Transverse colon (tissue), 4 donors: ENCODE measurements at regions of chr18 and their contacts with region 1.

Region 1: DNA sequence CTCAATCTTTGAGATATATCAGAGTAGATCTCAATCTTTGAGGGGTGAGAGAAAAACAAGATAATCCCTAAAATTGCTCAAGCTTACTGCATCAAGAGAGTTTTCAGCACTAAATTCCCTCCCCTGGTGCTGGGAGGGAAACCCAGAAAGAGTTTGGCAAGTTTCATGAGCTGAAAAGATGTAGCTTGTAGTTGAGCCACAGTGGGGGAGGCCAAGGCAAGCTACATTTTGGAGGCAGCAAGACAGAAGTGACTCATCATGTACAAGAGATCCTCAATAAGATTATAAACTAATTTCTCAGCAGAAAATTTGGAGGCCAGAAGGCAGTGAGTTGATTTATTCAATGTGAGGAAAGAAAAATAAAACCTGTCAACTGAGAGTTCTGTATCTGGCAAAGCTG is 308.2 kb downstream of the PIEZO2 start:
- DNase-seq: no peak
- H3K4me3 ChIP-seq: no peak overlapping the region
- H3K27ac ChIP-seq: no peak overlapping the region
- H3K4me1 ChIP-seq: no peaks in the 10 kb centered on the region
- H3K27me3 ChIP-seq: no peaks in the 10 kb centered on the region
- CTCF ChIP-seq: no peak
- EP300 ChIP-seq: no peak
- POLR2A ChIP-seq: no peak

Region 2: DNA sequence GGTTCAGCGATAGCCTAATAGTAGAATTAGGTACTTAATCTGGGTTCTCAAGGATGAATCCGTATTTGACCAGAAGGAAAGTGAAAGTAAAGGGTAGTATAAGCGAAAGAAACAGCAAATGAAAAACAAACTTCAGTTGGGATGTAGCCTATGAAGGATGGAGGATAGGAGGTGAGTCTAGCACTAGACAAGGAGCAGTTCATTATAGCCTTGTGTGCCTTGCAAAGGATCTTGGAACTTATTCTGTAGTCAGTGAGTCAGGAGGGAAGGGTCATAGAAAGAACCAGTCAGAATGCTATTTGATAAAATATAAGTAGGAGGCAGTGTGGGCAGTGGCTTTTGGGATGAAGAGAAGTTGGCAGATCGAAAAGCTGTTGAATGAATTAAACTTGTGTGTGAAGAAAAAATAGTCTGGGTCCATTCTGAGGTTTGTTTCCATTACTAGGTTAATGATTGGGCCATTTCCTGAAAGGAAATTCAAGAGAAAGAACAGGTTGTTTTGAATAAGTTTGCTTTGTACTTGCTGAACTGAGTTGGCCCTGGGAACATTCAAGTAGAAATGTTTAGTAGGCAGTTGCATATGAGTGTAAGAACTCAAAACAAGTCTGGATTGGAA is 1656.1 kb before region 1 on chr18:
- in situ Hi-C with region 1: no loop called
- intact Hi-C with region 1: loop called (anchors 5 kb)
- DNase-seq: no peak
- H3K4me3 ChIP-seq: no peak overlapping the region
- H3K27ac ChIP-seq: no peak overlapping the region
- H3K4me1 ChIP-seq: peaks cover 0 to 32% (median 5%) of the 10 kb centered on the region in 4 donors
- H3K27me3 ChIP-seq: no peaks in the 10 kb centered on the region
- CTCF ChIP-seq: no peak
- EP300 ChIP-seq: no peak
- POLR2A ChIP-seq: no peak

Region 3: DNA sequence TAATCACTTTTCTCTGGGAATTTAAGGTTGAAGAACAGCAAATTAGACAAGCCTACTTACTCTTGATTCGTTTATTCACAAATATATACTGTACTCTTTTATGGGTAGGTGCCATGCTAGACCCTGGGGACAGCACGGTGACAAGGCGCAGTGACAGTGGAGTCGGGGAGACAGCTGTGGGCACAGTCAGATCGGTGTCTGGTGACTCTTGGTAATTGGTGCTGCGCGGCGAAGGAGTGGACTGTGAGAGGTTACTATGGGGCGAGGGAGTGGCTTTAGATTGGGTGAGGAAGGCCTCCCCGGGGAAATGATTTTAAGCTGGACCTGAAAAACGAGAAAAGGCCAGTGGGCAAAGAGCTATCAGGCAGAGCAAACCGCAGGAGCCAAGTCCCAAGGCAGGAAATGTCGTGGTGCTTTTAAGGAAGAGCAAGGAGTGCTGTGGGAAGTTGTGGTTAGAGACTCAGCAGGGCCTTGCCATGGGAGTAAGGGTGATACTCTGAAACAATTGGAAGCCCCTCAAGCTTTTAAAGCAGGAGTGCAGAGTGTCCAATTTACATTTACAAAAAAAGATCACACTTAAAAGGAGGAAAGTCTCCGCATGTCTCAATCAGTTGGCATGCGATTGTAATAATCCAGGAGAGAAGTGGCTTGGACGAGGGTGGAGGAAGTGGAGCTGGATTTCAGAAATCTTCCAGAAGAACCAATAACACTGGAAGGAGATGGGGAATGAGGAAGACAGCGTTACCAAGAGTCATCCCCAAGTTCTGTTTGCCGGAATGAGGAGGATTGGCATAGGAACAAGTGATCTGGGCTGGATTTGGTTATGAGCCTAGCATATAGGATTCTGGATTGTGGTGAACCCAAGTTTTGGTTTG is 991.6 kb before region 1 on chr18:
- in situ Hi-C with region 1: no loop called
- intact Hi-C with region 1: no loop called
- DNase-seq: peak; percentile 50
- H3K4me3 ChIP-seq: no peak overlapping the region
- H3K27ac ChIP-seq: peak overlapping the region in 3 of 4 donors; percentile 31 to 60 (median 59)
- H3K4me1 ChIP-seq: peaks cover 0 to 50% (median 22%) of the 10 kb centered on the region in 4 donors
- H3K27me3 ChIP-seq: no peaks in the 10 kb centered on the region
- CTCF ChIP-seq: no peak
- EP300 ChIP-seq: no peak
- POLR2A ChIP-seq: no peak

Region 4: DNA sequence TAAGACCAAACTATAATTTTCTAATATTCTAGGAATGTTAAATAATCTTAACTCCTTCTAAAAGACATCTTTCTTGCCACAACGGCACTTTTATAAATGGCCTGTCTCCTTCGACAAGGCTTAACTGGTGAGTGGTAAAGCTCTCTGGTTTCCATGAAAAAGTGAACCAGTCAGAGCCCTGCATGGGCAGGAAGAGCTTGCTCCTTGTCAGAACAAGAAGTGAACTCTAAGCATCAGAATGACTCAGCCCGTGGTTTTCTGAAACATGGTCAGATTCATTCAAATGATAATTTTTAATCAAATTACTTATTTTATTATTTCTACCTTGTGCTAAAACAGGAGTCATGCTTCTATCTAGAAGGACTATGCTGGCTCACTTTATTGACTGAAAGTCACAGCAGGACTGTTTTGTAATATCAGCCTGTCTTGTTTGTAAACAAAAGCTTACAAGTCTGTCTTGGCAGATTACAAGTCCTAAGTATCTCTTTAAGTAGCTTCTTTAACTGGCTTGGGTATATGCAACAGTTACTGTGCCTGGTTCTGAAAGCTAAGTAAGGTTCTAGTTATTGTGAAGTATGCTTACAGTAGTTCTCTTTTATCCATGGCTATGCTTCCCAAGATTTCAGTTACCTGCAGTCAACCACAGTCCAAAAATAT is 70.0 kb before region 1 on chr18:
- in situ Hi-C with region 1: loop called in 1 of 4 experiments (anchors 10 kb)
- intact Hi-C with region 1: no loop called
- DNase-seq: no peak
- H3K4me3 ChIP-seq: no peak overlapping the region
- H3K27ac ChIP-seq: no peak overlapping the region
- H3K4me1 ChIP-seq: no peaks in the 10 kb centered on the region
- H3K27me3 ChIP-seq: no peaks in the 10 kb centered on the region
- CTCF ChIP-seq: no peak
- EP300 ChIP-seq: no peak
- POLR2A ChIP-seq: no peak

Region 5: DNA sequence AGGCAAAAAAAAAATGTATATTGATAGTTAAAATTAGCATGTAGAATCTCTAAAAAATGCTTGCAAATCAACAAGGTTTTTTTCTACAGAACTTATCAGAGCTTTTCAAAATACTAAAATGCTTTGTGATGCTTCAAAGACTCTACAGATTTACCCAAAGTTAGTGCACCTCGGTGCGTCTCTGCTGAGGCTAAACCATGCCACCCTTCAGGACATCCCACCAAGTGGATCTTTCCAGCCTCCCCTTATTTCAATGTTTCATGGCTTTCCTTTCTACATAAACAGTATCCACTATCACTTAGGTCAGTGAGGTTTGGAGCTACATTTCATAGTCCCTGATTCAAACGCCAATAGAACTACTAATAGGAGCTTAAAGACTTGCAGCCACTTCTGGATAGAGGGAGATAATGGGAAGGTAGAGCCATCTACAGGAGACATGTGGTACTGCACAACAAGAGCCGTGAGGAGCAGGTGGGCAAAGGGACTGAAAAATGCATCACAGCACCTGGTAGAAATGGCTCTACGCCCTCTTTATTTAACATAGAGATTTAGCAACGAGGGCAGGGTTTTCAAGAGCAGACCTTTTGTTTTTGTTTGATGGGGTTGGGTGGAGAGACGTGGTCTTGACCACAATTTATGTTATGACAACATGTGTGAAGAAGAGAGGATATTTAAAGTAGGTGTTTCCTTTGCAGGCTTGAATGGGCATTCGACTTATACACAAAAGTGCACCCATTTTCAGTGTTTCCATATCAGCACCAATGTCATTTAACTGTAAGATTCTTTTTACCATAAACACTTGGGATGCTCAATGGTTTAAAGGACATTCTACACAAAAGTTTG is 712.1 kb after region 1 on chr18:
- in situ Hi-C with region 1: loop called in 1 of 4 experiments (anchors 25 kb)
- intact Hi-C with region 1: no loop called
- DNase-seq: no peak
- H3K4me3 ChIP-seq: no peak overlapping the region
- H3K27ac ChIP-seq: no peak overlapping the region
- H3K4me1 ChIP-seq: no peaks in the 10 kb centered on the region
- H3K27me3 ChIP-seq: no peaks in the 10 kb centered on the region
- CTCF ChIP-seq: peak; percentile 60 to 84 (median 77)
- EP300 ChIP-seq: no peak
- POLR2A ChIP-seq: no peak